Calu3 (cell line): ENCODE measurements at regions of chr12 and their contacts with region 1.

Region 1: DNA sequence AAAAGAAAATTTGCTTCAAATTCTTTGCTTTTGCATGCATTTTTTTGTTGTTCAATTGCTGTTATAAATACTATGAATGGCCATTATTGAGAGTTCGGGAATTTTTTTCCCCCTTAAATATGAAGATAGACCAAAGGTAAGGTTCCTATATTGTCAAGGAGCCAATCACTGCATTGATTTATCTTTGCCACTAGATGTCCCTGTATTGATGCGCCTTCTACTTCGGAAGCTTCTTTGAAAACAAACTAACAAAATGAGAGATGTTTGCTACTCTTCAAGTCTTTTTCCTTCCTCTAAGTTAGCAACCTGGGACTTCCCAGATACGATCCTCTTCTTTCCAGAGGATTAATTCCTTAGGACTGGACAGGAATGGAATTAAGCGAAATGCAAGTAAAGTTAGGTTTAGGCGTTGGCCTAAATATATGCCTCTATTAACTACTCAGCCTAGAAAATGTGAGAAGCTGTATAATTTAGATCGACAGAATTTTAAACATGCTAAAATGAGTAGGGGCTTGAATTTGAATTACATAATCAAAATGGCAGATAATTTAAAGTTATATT is 318.1 kb downstream of the AEBP2 start:
- DNase-seq: no peak
- H3K4me3 Mint-ChIP-seq: no peak overlapping the region
- H3K27ac Mint-ChIP-seq: no peak overlapping the region
- H3K4me1 Mint-ChIP-seq: peaks cover 42% of the 10 kb centered on the region
- H3K27me3 Mint-ChIP-seq: no peaks in the 10 kb centered on the region
- CTCF ChIP-seq: peak; percentile 32

Region 2: GRCh38 chr12:19800884-19801283 is 43.5 kb after region 1 on chr12:
- CTCF ChIA-PET with region 1: no interaction called
- intact Hi-C with region 1: loop called (anchors 5 kb)
- DNase-seq: no peak
- H3K4me3 Mint-ChIP-seq: no peak overlapping the region
- H3K27ac Mint-ChIP-seq: peak overlapping the region; percentile 63
- H3K4me1 Mint-ChIP-seq: peaks cover 26% of the 10 kb centered on the region
- H3K27me3 Mint-ChIP-seq: no peaks in the 10 kb centered on the region
- CTCF ChIP-seq: no peak

Region 3: DNA sequence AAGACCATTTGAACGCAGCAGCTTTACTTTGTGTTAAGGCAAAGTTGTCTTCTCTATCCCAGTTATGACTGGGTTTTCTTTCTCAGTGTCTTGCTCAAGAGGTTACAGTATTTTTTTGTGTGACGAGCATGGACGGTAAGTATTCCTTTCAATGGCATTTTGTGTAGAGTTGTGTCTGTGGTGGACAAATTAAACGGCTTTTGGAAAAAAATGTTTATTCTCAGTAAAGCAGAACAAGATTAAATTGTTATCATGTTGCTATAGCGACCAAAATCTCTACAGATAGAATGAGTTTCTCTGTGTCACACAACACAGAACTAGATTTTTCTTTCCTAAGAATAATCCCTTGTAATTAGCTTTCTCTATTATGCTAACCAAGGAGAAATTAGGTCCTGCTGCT is 99.0 kb after region 1 on chr12:
- CTCF ChIA-PET with region 1: no interaction called
- intact Hi-C with region 1: no loop called
- DNase-seq: no peak
- H3K4me3 Mint-ChIP-seq: no peak overlapping the region
- H3K27ac Mint-ChIP-seq: no peak overlapping the region
- H3K4me1 Mint-ChIP-seq: peaks cover 20% of the 10 kb centered on the region
- H3K27me3 Mint-ChIP-seq: no peaks in the 10 kb centered on the region
- CTCF ChIP-seq: no peak

Region 4: DNA sequence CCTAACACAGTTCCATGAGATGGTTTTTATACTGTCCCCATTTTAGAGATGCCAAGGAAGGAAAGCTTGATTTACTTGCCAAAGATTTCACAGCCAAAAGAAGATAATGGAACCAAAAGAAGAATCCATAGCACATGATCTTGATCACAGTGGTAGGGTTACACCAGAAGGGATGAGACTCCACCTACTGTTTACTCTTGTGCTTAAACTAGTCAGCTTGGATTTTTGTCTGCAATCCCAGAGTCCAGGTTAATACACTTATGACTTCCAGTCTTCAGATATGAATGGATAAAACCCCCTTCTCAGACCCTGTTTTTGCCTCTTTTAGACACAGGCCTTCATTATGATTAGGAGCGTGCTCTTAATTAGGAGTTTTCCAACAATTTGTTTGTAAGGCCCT is 136.1 kb after region 1 on chr12:
- CTCF ChIA-PET with region 1: interaction called, 5 read pairs
- intact Hi-C with region 1: loop called (anchors 1 kb)
- DNase-seq: no peak
- H3K4me3 Mint-ChIP-seq: no peak overlapping the region
- H3K27ac Mint-ChIP-seq: no peak overlapping the region
- H3K4me1 Mint-ChIP-seq: peaks cover 16% of the 10 kb centered on the region
- H3K27me3 Mint-ChIP-seq: no peaks in the 10 kb centered on the region
- CTCF ChIP-seq: no peak

Region 5: GRCh38 chr12:19967486-19967885 is 210.1 kb after region 1 on chr12:
- CTCF ChIA-PET with region 1: interaction called, 4 read pairs
- intact Hi-C with region 1: loop called (anchors 5 kb)
- DNase-seq: peak; percentile 49
- H3K4me3 Mint-ChIP-seq: peak overlapping the region; percentile 35
- H3K27ac Mint-ChIP-seq: peak overlapping the region; percentile 95
- H3K4me1 Mint-ChIP-seq: peaks cover 47% of the 10 kb centered on the region
- H3K27me3 Mint-ChIP-seq: no peaks in the 10 kb centered on the region
- CTCF ChIP-seq: no peak

Region 6: GRCh38 chr12:20212658-20213555 is 455.5 kb after region 1 on chr12:
- CTCF ChIA-PET with region 1: no interaction called
- intact Hi-C with region 1: loop called (anchors 5 kb)
- DNase-seq: peak; percentile 63
- H3K4me3 Mint-ChIP-seq: peak overlapping the region; percentile 34
- H3K27ac Mint-ChIP-seq: peak overlapping the region; percentile 78
- H3K4me1 Mint-ChIP-seq: peaks cover 22% of the 10 kb centered on the region
- H3K27me3 Mint-ChIP-seq: no peaks in the 10 kb centered on the region
- CTCF ChIP-seq: no peak

Region 7: GRCh38 chr12:20376984-20377383 is 619.6 kb after region 1 on chr12:
- CTCF ChIA-PET with region 1: no interaction called
- intact Hi-C with region 1: loop called (anchors 1 kb)
- DNase-seq: peak; percentile 24
- H3K4me3 Mint-ChIP-seq: no peak overlapping the region
- H3K27ac Mint-ChIP-seq: no peak overlapping the region
- H3K4me1 Mint-ChIP-seq: peaks cover 36% of the 10 kb centered on the region
- H3K27me3 Mint-ChIP-seq: no peaks in the 10 kb centered on the region
- CTCF ChIP-seq: no peak